Sciatic nerve (tissue), 2 donors: ENCODE measurements at regions of chr4 and their contacts with region 1.

Region 1: GRCh38 chr4:96713271-96713850 is 873.5 kb downstream of the PDHA2 start:
- DNase-seq: no peak
- ATAC-seq: no peak

Region 2: GRCh38 chr4:95362906-95363558 is 1350.3 kb before region 1 on chr4:
- intact Hi-C with region 1: no loop called
- DNase-seq: no peak
- ATAC-seq: peak; percentile 55

Region 3: DNA sequence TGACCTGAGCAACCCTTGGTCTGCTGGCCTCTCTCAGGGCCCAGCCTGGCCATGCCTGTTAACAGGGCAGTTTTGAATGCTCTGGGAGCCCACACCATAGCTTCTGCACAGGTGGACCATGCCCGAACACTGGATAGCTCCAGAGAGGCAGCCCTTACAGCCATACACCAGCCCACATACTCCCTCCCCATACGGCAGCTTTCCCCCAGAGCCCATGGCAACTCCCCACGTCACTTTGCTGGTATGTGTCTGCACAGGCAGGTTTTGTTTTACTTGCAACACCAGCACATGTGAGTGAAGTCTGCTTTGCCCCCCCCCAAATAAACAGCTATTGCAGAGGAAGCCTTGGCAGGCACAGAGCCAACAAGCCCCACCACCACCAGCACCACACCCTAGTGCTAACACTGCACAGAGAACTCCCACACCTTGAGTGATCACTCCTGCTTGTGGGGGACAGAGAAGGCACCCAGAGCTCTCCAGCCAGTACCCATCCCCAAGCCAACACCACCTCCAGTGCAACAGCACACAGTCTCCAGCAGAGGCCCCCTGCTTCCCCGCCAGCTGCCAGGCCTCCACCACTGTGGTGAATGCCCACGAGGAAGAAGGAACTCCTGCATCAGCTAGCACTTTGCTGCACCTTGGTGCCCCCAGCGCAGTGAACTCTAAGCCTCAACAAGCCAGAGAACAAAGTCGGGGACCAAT is 1342.6 kb after region 1 on chr4:
- intact Hi-C with region 1: loop called (anchors 5 kb)
- DNase-seq: no peak
- ATAC-seq: no peak